Left lung (tissue), 14 donors: ENCODE measurements at regions of chr2 and their contacts with region 1.

Region 1: DNA sequence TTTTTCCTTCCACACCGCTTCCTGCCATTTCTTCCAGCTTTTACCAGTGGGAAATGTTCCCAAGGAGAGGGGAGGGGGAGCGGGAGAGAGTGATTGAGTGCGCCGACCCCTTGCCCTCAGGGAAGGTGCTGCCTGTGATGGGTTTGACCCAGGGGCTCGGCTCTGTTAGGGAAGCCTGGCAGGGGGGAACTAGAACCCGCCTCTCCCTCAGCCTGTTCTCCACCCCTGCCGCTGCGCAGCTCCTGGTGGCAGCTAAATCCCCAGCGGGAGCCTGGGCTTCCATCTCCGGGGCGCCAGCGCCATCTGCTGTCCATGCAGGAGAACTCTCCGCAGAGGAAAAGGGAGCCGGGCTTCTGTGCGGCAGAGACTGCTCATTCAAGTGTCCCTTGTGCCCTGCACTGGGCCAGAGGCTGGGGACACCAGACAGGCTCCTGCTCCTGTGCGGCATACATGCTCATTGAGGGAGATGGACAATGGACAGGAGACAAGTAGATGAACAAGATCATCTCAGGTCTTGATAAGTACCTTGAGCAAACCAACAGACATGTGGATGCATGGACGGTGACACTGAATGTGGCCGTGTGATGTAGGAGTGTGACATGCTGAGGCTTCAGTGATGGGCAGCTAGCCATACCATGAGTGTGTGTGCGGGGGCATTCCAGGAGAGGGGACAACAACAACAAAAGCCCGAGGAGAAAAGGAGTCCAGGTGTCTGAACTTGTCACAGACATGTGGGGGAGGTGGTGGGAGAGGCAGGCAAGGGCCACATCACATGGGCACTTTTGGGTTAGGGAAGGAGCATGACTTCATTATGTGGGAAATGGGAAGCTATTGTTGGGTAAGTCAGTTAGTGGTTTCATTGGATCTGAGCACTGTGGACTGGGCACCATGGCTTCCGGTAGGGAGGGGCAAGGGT is 13.3 kb downstream of the CHPF start:
- DNase-seq: peak; percentile 85 to 97 (median 90)
- ATAC-seq: peak; percentile 98
- H3K4me3 ChIP-seq: no peak overlapping the region
- H3K27ac ChIP-seq: no peak overlapping the region
- H3K4me1 ChIP-seq: peaks cover 0 to 3% of the 10 kb centered on the region in 2 donors
- H3K27me3 ChIP-seq: peaks cover 18 to 82% of the 10 kb centered on the region in 2 donors
- CTCF ChIP-seq: peak; percentile 91 to 95

Region 2: DNA sequence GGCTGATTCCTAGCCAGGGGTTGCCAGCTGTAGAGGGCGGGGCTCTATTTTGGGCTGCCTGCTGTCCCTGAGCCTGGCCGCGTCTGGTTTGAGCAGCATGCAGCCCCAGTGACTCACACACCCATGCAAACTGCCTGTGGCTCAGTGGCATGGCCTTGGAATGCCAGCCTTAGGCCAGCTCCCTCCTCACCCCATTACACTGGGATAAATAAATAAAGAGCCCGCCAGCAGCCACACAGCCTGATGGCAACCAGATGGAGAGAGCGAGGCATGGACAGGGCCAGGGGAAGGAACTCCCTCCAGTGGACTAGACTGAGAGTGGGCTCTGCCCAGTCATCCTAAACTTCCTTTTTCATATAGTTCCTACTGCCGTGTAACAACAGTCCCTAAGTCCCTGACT is 388.0 kb before region 1 on chr2:
- intact Hi-C with region 1: no loop called
- DNase-seq: no peak
- ATAC-seq: peak; percentile 42
- H3K4me3 ChIP-seq: no peak overlapping the region
- H3K27ac ChIP-seq: no peak overlapping the region
- H3K4me1 ChIP-seq: no peaks in the 10 kb centered on the region
- H3K27me3 ChIP-seq: no peaks in the 10 kb centered on the region
- CTCF ChIP-seq: no peak

Region 3: DNA sequence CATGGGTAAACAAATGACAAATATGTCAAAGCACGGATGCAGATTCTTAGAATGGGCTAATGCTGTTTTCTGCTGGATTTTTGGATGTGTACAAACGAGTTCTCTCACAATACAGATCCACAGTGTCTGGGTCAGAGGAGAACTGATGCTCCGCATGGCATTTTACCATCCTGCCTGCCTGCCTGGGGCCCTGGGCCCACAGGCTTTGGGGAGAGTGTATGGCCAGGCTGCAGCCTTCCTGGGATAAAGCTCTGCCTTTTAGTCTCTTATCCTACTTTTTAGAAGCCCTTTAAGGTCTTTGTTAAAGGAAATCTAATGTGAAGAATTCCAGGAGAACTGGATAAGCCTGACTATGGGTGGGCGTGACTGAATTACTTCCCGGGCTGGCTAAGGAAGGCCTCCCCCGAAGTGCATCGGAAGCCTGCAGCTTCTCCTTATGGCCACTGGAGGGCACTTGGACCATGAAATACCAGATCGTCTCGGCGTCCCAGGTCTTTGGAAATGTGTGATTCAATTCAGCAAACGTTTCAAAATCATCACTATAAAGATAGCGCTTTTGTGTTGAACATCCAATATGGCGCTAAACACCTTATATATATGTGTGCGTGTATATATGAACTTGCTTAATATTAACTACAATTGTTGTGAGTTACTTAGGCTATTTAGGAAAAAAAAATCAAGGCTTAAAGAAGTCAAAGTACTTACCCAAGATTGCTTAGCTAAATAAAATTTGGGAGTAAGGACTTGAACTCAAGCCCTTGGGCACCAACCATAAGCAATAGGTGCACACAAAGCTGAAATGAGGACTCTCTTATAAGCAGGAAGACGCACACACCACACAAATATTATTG is 127.4 kb before region 1 on chr2:
- intact Hi-C with region 1: loop called in 1 of 2 experiments (anchors 2 kb)
- DNase-seq: peak in 3 of 4 donors; percentile 56 to 86 (median 61)
- ATAC-seq: peak; percentile 87
- H3K4me3 ChIP-seq: no peak overlapping the region
- H3K27ac ChIP-seq: no peak overlapping the region
- H3K4me1 ChIP-seq: no peaks in the 10 kb centered on the region
- H3K27me3 ChIP-seq: peaks cover 0 to 12% of the 10 kb centered on the region in 2 donors
- CTCF ChIP-seq: peak; percentile 86 to 91

Region 4: DNA sequence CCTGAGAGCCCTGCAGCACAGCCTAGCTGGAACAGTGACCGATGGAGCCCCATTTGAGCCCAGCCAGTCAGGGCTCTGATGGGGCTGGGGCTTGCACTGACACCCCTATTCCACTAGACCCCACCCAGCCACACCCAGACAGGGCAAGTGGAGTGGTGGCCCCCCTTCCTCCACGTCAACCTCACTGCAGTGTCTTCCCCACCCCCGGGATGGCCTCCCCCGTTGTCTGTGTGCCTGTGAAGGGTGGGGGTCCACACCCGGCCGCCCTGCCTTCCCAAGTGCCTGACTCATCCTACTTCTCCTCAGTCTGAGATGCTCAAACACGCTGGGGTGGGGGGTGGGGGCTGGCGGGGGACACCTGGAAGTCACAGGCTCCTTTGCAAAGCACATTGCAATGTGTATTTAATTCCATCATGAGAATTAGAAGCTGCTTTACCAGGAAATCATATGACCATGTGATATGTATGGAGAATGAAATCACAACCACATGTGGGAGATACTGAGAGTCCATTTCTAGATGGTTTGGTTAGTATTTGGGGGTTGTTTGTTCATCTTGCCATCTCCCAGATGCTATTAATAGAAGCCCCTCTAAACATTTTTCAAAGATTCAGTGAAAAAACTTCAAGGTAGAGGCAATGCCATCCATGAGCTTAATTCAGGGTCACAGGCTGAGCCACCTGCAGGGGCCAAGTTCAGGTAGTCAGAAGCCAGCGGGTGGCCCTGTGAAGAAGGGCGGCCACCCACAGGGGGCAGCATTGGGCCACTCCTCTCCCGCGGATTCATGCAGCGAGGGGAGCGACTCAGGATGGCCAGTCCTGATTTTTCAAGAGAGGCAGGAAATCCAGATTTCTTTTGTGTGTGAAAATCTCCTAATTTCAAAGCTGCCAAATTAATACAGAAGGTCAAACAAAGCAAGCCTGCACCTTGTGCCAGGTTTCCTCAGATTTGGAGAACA is 54.3 kb before region 1 on chr2:
- intact Hi-C with region 1: loop called in 1 of 2 experiments (anchors 5 kb)
- DNase-seq: peak; percentile 51 to 90 (median 67)
- ATAC-seq: peak; percentile 92
- H3K4me3 ChIP-seq: no peak overlapping the region
- H3K27ac ChIP-seq: no peak overlapping the region
- H3K4me1 ChIP-seq: no peaks in the 10 kb centered on the region
- H3K27me3 ChIP-seq: peaks cover 0 to 55% of the 10 kb centered on the region in 2 donors
- CTCF ChIP-seq: peak; percentile 84 to 86